Ovary (tissue), 10 donors: ENCODE measurements at regions of chr17 and their contacts with region 1.

Region 1: DNA sequence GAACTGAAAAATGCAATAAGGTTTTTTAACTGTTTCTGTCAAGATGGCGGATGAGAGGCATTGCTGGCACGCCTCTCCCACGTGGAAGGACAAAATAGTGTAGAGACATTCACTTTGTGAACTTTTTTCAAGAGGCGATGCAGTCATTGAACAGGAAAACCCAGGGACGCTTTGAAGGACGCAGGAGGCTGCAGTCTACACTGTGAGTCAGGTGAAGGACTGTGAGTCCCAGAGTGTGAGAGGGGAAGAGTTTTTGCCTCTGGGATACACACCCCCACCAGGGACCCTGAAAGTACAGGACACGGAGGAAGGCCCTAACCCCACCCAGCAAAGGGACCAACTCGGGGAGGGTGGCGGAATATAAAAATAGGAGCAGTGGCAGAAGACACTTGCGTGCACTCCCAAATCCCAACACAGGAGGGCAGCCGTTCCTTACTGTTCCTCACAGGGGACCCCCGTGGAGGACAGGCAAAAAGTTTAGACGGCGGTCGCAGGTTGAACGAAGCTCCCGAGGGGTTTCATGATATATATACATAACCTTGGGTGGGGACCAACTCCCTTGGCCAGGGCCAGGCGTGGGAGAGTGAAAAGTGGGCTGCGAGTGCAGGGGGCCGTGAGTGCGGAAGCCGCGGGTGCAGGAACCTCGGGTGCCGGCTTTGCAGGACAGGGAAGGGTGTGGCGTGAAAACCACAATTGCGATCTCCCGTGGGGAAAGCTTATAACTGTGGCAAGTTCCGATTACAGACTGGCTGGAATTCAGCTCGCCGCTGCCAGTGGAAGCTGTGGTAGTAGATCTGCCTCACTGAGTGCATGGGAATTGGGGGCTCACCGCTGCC is 82.0 kb upstream of the ALOX12 start:
- DNase-seq: peak; percentile 52 to 81 (median 78)
- H3K4me3 ChIP-seq: no peak overlapping the region
- H3K27ac ChIP-seq: no peak overlapping the region
- H3K4me1 ChIP-seq: no peaks in the 10 kb centered on the region
- H3K27me3 ChIP-seq: no peaks in the 10 kb centered on the region
- CTCF ChIP-seq: peak; percentile 53 to 61 (median 56)
- EP300 ChIP-seq: no peak
- POLR2A ChIP-seq: no peak

Region 2: DNA sequence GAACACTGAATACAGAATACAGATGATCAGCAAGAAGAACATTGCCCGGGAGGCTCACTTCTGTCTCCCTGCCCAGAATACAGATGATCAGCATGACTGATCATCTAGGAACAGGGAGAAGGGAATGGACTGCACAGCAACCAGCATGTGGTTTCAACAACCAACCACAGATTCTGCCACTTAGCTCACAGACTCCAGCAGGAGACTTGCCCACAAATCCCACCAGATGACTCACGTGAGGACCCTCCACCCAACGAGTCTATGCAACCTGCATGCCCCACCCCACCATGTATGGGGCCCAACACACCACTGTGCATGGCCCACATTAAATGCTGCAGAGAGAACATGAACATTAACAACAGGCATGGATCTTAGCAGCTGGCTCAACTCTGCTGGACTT is 45.9 kb after region 1 on chr17:
- intact Hi-C with region 1: no loop called
- DNase-seq: no peak
- H3K4me3 ChIP-seq: no peak overlapping the region
- H3K27ac ChIP-seq: no peak overlapping the region
- H3K4me1 ChIP-seq: no peaks in the 10 kb centered on the region
- H3K27me3 ChIP-seq: no peaks in the 10 kb centered on the region
- CTCF ChIP-seq: no peak
- EP300 ChIP-seq: no peak
- POLR2A ChIP-seq: no peak

Region 3: DNA sequence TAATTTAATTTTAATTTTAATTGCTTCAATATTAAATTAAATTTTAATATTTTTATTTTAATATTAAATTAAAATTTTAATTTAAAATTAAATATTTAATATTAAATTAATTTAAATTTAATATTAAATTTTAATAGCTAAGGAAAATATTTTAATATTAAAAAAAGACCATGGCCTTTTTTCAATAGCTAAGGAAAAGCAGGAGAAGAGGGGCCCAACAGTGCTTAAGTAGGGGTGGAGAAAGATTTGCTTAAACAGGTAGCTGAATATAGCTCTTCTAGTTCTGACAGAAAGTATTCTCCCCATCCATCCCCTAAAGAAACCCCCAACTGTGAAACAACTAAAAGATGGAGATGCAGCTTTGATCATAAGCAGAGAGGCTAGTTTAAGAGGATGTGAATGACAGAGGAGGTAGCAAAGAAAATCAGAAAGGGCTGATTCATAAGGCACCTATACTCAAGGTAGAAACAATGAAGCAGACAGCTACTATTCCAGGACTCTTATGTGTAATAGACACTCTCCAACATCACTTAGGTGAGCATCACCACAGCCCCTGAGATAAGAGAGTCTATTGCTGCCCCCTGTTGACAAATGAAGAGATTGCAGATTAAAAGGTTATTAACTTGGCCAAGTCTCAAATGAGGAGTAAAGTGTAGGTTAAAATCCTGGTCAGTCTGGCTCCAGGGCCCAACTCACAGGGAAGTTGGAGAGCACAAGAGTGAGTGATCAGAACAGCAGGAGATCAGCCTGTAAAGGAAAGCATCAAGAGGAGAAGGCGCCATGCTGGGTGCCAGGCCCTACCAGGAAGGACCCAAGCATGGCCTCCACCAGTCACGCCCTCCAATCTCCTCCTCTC is 90.8 kb after region 1 on chr17:
- intact Hi-C with region 1: loop called in 3 of 4 experiments (anchors 5 to 10 kb)
- DNase-seq: no peak
- H3K4me3 ChIP-seq: no peak overlapping the region
- H3K27ac ChIP-seq: no peak overlapping the region
- H3K4me1 ChIP-seq: no peaks in the 10 kb centered on the region
- H3K27me3 ChIP-seq: no peaks in the 10 kb centered on the region
- CTCF ChIP-seq: peak; percentile 46 to 55 (median 46)
- EP300 ChIP-seq: no peak
- POLR2A ChIP-seq: no peak

Region 4: DNA sequence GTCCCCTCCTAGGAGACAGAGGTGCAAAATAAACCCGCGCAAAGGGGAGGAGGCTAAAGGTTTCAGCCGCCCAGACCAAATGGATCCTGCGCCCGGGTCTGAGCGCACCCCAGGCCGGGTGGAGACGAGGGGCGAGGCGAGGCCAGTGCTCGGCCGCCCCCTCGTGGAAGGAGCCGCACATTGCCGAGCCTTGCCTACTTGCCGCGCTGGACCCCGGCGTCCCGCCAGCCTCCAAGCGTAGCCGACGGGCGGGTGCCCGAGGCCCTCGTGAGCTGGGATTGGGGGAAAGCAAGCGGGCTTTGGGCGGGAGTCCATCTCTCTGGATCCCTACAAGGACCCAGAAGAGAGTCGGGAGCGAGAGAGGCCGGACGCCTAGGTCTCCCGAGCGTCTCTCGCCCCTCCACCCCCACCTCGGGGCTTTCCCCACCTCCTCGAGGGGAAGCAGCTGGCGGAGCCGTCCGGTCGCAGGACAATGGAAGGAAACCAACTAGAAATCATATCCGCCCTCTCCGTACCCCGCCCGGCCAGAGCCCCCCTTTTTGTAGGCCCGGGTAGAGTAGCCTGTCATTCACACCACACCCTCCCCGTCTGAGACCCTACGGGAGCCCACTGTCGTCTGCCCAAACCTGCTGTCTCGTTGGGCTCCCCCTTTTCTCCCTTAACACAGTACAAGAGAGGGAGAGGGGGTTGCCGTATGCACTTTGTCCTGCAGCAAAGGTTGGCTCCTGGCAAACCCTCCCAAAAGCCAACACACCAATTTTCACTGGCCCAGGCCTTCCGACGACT is 108.4 kb after region 1 on chr17:
- intact Hi-C with region 1: loop called in 1 of 4 experiments (anchors 5 kb)
- DNase-seq: peak; percentile 58 to 91 (median 80)
- H3K4me3 ChIP-seq: peak overlapping the region; percentile 1
- H3K27ac ChIP-seq: peak overlapping the region in 1 of 2 donors; percentile 9
- H3K4me1 ChIP-seq: peaks cover 7% of the 10 kb centered on the region
- H3K27me3 ChIP-seq: no peaks in the 10 kb centered on the region
- CTCF ChIP-seq: peak; percentile 88 to 97 (median 90)
- EP300 ChIP-seq: no peak
- POLR2A ChIP-seq: no peak

Region 5: GRCh38 chr17:7035591-7036368 is 122.0 kb after region 1 on chr17 and contains the start of gene SLC16A13:
- intact Hi-C with region 1: no loop called
- DNase-seq: peak; percentile 81 to 93 (median 89)
- H3K4me3 ChIP-seq: peak within 1 kb of the TSS; percentile 59
- H3K27ac ChIP-seq: peak within 1 kb of the TSS; percentile 11 to 39
- H3K4me1 ChIP-seq: peaks cover 2% of the 10 kb centered on the region
- H3K27me3 ChIP-seq: no peaks in the 10 kb centered on the region
- CTCF ChIP-seq: no peak
- EP300 ChIP-seq: no peak
- POLR2A ChIP-seq: no peak
- total RNA-seq, gene SLC16A13: 0.12 to 2.8 (median 1.2) TPM

Region 6: DNA sequence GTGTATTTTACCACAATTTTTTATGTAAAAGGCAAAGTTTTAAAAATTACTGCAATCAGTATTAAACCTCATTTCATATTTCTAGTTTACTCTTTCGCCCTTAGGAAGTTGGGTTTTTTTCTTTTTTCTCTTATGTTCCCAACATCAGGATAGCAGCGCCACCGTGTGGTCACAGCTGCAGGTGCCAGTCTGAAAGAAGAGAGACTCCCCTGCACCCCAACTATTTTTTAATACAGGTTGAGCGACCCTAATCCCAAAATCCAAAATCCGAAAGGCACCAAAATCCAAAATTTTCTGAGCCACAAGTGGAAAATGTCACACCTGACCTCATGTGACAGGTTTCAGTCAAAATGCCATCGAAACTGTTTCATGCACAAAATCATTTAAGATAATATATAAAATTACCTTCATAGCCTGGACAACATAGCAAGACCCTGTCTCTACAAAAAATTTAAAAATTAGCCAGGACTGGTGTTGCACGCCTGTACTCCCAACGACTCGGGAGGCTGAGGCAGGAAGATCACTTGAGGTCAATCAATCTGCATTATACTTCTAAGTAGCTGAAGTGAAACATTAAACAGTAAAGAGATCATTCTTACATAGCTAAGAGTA is 222.5 kb after region 1 on chr17:
- intact Hi-C with region 1: loop called in 2 of 4 experiments (anchors 10 kb)
- DNase-seq: peak; percentile 62 to 86 (median 73)
- H3K4me3 ChIP-seq: no peak overlapping the region
- H3K27ac ChIP-seq: no peak overlapping the region
- H3K4me1 ChIP-seq: no peaks in the 10 kb centered on the region
- H3K27me3 ChIP-seq: no peaks in the 10 kb centered on the region
- CTCF ChIP-seq: peak; percentile 38 to 76 (median 60)
- EP300 ChIP-seq: no peak
- POLR2A ChIP-seq: no peak